ENCODE measurements at regions of chr3 and their contacts with region 1.

Region 1: GRCh38 chr3:133588784-133589465 is 15.4 kb downstream of the CDV3 start:
- DNase-seq: no peak
- ATAC-seq: no peak
- H3K4me3 ChIP-seq: no peak overlapping the region
- H3K27ac ChIP-seq: no peak overlapping the region
- H3K4me1 ChIP-seq: peaks cover 0 to 15% (median 0%) of the 10 kb centered on the region in 9 donors
- H3K27me3 ChIP-seq: no peaks in the 10 kb centered on the region
- CTCF ChIP-seq: no peak

Region 2: DNA sequence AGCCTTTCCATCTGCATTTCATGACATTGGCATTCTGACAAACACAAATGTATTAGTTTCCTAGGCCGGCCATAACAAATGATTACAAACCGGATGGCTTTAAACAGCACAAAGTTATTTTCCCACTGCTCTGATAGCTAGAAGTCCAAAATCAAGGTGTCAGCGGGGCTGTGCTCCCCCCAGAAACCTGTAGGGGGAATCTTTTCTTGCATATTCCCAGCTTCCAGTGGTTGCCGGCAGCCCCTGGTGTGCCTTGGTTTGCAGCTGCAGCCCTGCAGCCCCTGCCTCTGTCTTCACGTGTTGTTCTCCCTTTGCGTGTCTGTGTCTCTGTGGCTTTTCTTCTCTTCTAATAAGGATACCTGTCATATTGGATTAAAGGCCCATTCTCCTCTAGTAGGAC is 94.5 kb before region 1 on chr3:
- intact Hi-C with region 1: loop called in 1 of 10 experiments (anchors 10 kb)
- DNase-seq: no peak
- ATAC-seq: no peak
- H3K4me3 ChIP-seq: no peak overlapping the region
- H3K27ac ChIP-seq: no peak overlapping the region
- H3K4me1 ChIP-seq: no peaks in the 10 kb centered on the region
- H3K27me3 ChIP-seq: no peaks in the 10 kb centered on the region
- CTCF ChIP-seq: peak in 6 of 9 donors; percentile 10 to 36 (median 23)